ENCODE measurements at regions of chr12 and their contacts with region 1.

Region 1: DNA sequence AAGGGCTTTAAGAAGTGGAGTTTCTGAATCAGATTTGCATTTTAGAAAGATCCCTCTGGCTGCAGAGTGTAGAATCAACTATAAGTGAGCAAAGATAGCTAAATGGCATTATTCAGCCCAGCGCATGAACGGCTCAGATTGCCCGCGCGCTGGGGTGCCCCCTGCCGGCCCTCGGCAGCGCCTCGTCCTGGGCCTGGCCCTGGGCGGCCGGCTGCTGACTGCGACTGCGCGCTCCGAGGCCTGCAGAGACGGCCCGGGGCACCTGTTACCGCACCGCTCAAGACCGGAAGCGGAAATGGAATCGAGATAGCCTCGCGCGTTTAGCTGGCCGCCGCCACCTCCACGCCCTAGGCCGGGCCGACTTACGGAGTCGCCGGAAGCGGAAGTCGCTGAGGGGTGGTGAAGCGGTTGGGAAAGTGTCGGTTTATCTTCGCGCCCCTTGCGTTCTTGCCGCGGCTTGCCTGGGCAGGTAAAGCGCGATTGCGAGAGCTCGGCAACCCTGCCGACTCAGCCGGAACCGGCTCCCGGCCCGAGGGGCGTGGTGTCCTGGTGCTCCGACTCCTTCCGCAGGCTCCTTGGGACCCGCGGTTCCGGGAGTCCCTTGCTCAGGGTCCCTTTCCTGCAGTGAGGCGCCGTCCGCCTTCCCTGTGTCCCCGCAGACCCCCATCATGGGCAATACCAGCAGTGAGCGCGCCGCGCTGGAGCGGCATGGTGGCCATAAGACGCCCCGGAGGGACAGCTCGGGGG is at the start of gene PRKAB1:
- DNase-seq: peak; percentile 96
- ATAC-seq: peak; percentile 86 to 96
- H3K4me3 ChIP-seq: peak within 1 kb of the TSS; percentile 86 to 98 (median 92)
- H3K27ac ChIP-seq: peak within 1 kb of the TSS; percentile 90 to 98 (median 96)
- H3K4me1 ChIP-seq: peaks cover 29 to 40% of the 10 kb centered on the region in 2 donors
- H3K27me3 ChIP-seq: no peaks in the 10 kb centered on the region
- CTCF ChIP-seq: peak; percentile 86 to 97 (median 88)
- POLR2A ChIP-seq: peak; percentile 67 to 77
- total RNA-seq, gene PRKAB1: 7.1 to 21.0 (median 17.6) TPM

Region 2: GRCh38 chr12:119249326-119250155 is 418.2 kb before region 1 on chr12:
- in situ Hi-C with region 1: no loop called
- intact Hi-C with region 1: loop called (anchors 10 kb)
- DNase-seq: no peak
- ATAC-seq: no peak
- H3K4me3 ChIP-seq: no peak overlapping the region
- H3K27ac ChIP-seq: peak overlapping the region in 2 of 4 donors; percentile 3 to 26
- H3K4me1 ChIP-seq: peaks cover 23 to 28% of the 10 kb centered on the region in 2 donors
- H3K27me3 ChIP-seq: no peaks in the 10 kb centered on the region
- CTCF ChIP-seq: no peak
- POLR2A ChIP-seq: no peak

Region 3: DNA sequence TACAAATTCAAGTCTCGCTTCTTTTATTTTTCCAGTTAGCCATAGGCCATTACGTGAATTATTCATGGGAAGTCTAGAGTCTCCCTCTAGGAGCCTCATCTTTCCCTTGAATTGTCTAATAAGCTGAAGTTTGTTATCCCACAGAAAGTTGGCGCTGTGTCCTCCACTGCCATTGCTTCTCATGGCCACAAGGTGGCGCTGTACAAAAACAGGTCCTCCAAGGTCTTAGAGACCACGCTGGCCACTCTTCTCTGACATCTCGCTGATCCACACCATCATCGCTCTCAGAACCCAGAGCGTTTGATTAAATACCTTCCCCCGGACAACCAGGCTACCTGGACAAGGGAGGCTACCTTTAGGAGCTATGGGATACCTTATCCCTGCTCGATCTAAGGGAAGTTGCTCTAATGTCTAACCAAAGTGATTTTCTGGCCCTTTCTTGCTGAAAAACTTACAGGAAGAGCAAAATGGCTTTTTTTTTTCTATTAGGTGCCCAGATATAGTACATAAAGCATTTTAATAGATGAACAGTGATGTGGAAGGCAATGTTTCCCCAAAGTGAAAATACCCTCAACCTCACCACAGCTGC is 223.2 kb before region 1 on chr12:
- in situ Hi-C with region 1: loop called in 2 of 4 experiments (anchors 10 to 25 kb)
- intact Hi-C with region 1: no loop called
- DNase-seq: peak; percentile 16 to 49
- ATAC-seq: peak in 1 of 2 donors; percentile 54
- H3K4me3 ChIP-seq: no peak overlapping the region
- H3K27ac ChIP-seq: no peak overlapping the region
- H3K4me1 ChIP-seq: no peaks in the 10 kb centered on the region
- H3K27me3 ChIP-seq: no peaks in the 10 kb centered on the region
- CTCF ChIP-seq: peak; percentile 69 to 86 (median 84)
- POLR2A ChIP-seq: no peak

Region 4: DNA sequence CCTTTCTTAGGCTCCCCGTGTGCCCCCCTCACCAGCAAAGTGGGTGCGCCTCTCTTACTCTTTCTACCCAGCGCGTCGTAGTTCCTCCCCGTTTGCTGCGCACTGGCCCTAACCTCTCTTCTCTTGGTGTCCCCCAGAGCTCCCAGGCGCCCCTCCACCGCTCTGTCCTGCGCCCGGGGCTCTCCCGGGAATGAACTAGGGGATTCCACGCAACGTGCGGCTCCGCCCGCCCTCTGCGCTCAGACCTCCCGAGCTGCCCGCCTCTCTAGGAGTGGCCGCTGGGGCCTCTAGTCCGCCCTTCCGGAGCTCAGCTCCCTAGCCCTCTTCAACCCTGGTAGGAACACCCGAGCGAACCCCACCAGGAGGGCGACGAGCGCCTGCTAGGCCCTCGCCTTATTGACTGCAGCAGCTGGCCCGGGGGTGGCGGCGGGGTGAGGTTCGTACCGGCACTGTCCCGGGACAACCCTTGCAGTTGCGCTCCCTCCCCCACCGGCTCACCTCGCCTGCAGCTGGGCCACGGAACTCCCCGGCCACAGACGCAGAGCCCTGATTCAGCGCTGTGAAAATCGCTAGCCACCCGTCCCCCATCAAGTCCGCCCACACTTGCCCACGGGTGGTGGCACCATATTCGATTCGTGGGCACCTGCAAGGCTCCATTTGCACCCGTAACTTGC is 72.8 kb before region 1 on chr12:
- in situ Hi-C with region 1: no loop called
- intact Hi-C with region 1: loop called (anchors 5 kb)
- DNase-seq: peak; percentile 83 to 91
- ATAC-seq: peak; percentile 58 to 65
- H3K4me3 ChIP-seq: peak overlapping the region; percentile 74 to 91 (median 82)
- H3K27ac ChIP-seq: peak overlapping the region; percentile 92 to 98 (median 96)
- H3K4me1 ChIP-seq: peaks cover 35 to 43% of the 10 kb centered on the region in 2 donors
- H3K27me3 ChIP-seq: no peaks in the 10 kb centered on the region
- CTCF ChIP-seq: peak in 1 of 5 experiments; percentile 16
- POLR2A ChIP-seq: peak; percentile 86 to 89

Region 5: DNA sequence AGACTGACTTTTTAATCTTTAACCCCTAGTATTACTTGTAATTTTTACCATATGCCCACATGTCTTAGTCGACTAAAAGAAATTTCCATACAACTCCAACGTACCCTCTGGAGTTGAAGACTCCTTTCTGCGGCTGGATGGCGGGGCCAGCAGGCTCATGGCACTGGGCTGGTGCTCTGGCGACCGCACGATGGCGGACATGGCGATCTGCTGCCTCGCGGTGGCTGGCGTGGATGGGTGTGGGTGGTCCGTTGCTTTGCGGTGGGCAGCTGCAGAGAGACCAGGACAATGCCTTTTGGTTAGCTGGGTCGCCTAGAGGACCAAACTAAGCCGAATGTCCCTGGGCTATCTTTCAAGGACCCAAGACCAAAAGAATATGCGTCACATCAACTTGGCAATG is 50.4 kb after region 1 on chr12:
- in situ Hi-C with region 1: no loop called
- intact Hi-C with region 1: loop called (anchors 2 kb)
- DNase-seq: no peak
- ATAC-seq: no peak
- H3K4me3 ChIP-seq: no peak overlapping the region
- H3K27ac ChIP-seq: no peak overlapping the region
- H3K4me1 ChIP-seq: peaks cover 27 to 28% of the 10 kb centered on the region in 2 donors
- H3K27me3 ChIP-seq: no peaks in the 10 kb centered on the region
- CTCF ChIP-seq: no peak
- POLR2A ChIP-seq: no peak

Region 6: DNA sequence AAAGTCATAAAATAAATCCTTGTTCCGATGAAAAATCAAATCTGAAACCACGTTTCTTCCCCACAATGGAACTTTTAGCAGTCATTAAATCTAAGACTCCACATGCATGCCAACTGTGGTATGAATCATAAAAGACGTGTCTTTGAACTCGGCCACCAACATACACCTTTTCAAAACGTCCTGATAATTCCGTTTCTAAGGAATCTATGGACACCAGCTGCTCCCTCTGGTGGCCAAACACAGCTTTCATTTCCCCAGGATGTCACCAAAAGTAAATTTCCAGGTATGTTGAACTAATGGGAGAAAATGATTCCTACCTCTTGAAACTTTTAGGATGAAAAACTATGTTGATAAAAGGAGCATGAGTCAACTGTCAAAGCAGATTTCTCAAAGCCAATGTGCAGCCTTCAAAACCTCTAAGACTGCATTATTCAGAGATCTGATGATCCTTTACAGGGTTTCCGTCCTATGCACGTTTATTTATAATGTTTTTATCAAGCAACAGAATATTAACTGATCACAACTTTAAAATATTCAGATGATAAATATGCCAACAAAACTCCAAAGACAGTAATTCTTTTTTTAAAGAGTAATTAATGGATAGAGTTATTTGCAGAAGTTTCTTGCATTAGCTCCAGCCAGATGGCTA is 113.2 kb after region 1 on chr12:
- in situ Hi-C with region 1: no loop called
- intact Hi-C with region 1: loop called (anchors 5 kb)
- DNase-seq: no peak
- ATAC-seq: peak in 1 of 2 donors; percentile 39
- H3K4me3 ChIP-seq: no peak overlapping the region
- H3K27ac ChIP-seq: no peak overlapping the region
- H3K4me1 ChIP-seq: peaks cover 0 to 2% of the 10 kb centered on the region in 2 donors
- H3K27me3 ChIP-seq: no peaks in the 10 kb centered on the region
- CTCF ChIP-seq: peak; percentile 56 to 77 (median 70)
- POLR2A ChIP-seq: no peak

Region 7: DNA sequence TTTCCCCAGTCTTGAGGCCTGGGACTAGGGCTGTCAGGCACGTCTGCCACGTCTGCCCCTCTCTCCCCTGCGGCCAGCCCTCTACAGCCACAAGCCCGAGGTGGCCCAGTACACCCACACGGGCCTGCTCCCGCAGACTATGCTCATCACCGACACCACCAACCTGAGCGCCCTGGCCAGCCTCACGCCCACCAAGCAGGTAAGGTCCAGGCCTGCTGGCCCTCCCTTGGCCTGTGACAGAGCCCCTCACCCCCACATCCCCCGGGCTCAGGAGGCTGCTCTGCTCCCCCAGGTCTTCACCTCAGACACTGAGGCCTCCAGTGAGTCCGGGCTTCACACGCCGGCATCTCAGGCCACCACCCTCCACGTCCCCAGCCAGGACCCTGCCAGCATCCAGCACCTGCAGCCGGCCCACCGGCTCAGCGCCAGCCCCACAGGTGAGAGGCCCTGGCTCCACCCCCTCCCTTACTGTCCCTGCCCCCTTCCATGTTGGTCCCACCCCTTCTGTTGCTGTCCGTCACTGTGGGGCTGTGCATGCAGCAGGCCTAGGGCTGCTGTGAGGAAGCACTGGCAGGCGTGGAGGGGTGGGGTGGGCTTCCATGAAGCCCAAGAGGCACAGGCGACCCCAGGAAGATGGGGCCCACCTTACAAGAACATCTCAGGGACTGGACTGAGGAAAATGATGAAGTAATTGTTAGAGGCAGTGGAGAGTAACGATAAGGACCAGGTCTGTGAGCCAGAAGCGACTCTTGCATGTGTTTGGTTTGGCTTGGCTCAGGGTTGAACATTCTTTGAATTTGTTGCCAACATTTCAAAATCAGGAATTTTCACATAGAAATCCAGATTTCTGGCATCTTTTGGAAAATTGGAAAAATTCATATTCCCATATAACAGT is 1331.7 kb after region 1 on chr12:
- in situ Hi-C with region 1: no loop called
- intact Hi-C with region 1: no loop called
- DNase-seq: no peak
- ATAC-seq: no peak
- H3K4me3 ChIP-seq: no peak overlapping the region
- H3K27ac ChIP-seq: no peak overlapping the region
- H3K4me1 ChIP-seq: no peaks in the 10 kb centered on the region
- H3K27me3 ChIP-seq: peaks cover 0 to 11% (median 0%) of the 10 kb centered on the region in 3 donors
- CTCF ChIP-seq: no peak
- POLR2A ChIP-seq: no peak

Measured in gastrocnemius medialis (tissue), 4 donors.